ENCODE measurements at regions of chr1 and their contacts with region 1.

Region 1: DNA sequence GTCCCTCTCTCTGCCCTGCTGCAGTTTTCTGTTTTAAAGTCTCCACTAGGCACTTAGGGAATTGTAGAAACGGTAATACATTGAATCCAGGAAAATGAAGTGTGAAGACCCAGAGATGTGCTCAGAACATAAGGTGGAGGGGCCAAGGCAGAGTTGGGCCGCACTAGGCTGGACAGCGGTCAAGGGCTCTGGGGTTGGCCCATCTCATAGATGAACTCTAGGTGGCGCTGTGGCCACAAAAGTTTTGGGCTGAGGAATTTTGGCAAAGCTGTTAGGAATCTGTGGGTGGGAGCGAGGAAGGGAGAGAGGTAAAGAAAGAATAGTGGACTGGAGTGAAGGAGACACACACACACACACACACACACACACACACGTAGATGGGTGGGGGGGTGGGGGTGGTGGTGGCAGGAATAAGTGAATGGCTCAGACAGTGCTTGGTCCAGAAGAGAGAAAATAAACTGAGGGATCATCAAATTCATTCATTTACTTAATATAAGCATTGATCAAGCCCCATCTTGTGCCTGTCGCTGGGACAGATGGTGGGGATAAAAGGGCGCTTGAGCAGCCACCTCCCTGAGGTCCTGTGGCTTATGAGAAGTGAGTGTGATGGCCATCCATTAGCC is 258.5 kb downstream of the TRABD2B start:
- DNase-seq: peak; percentile 73
- H3K4me3 Mint-ChIP-seq: no peak overlapping the region
- H3K27ac Mint-ChIP-seq: no peak overlapping the region
- H3K4me1 Mint-ChIP-seq: no peaks in the 10 kb centered on the region
- H3K27me3 Mint-ChIP-seq: peaks cover 25% of the 10 kb centered on the region
- CTCF ChIP-seq: peak; percentile 77

Region 2: GRCh38 chr1:47934243-47934805 is 195.7 kb after region 1 on chr1:
- CTCF ChIA-PET with region 1: interaction called, 17 read pairs
- POLR2A ChIA-PET with region 1: interaction called, 3 read pairs
- intact Hi-C with region 1: loop called (anchors 1 kb)
- DNase-seq: peak; percentile 84
- H3K4me3 Mint-ChIP-seq: no peak overlapping the region
- H3K27ac Mint-ChIP-seq: no peak overlapping the region
- H3K4me1 Mint-ChIP-seq: peaks cover 49% of the 10 kb centered on the region
- H3K27me3 Mint-ChIP-seq: no peaks in the 10 kb centered on the region
- CTCF ChIP-seq: no peak

Region 3: GRCh38 chr1:48055876-48056764 is 317.4 kb after region 1 on chr1:
- CTCF ChIA-PET with region 1: interaction called, 57 read pairs
- POLR2A ChIA-PET with region 1: no interaction called
- intact Hi-C with region 1: loop called (anchors 1 kb)
- DNase-seq: no peak
- H3K4me3 Mint-ChIP-seq: no peak overlapping the region
- H3K27ac Mint-ChIP-seq: no peak overlapping the region
- H3K4me1 Mint-ChIP-seq: peaks cover 27% of the 10 kb centered on the region
- H3K27me3 Mint-ChIP-seq: no peaks in the 10 kb centered on the region
- CTCF ChIP-seq: no peak

Region 4: DNA sequence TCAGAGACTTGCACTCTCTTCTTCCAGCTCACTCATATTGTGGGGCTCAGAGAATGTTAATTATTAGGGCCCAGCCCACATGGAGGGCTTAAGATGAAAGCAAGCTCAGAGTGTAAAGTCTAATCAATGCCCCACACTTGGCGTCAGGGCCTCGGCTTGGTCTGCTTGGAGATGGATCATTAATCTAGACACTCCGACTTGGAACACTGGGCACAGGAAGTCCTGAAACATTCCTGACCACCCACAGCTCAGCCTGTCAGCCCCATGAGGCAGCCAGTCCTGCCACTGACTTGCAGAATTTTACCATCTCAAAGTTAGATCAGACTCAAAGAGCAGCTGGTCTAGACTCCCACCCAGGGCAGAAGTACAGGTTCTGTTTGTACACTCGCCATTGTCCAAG is 328.3 kb after region 1 on chr1:
- CTCF ChIA-PET with region 1: interaction called, 57 read pairs
- POLR2A ChIA-PET with region 1: no interaction called
- intact Hi-C with region 1: no loop called
- DNase-seq: no peak
- H3K4me3 Mint-ChIP-seq: no peak overlapping the region
- H3K27ac Mint-ChIP-seq: no peak overlapping the region
- H3K4me1 Mint-ChIP-seq: peaks cover 26% of the 10 kb centered on the region
- H3K27me3 Mint-ChIP-seq: no peaks in the 10 kb centered on the region
- CTCF ChIP-seq: no peak

Measured in MCF 10A (cell line).